ENCODE measurements at regions of chr18 and their contacts with region 1.

Region 1: GRCh38 chr18:35459005-35459441 is 38.7 kb downstream of the INO80C start:
- DNase-seq: peak; percentile 74
- H3K4me3 Mint-ChIP-seq: no peak overlapping the region
- H3K27ac Mint-ChIP-seq: peak overlapping the region; percentile 72
- H3K4me1 Mint-ChIP-seq: peaks cover 73% of the 10 kb centered on the region
- H3K27me3 Mint-ChIP-seq: no peaks in the 10 kb centered on the region
- CTCF ChIP-seq: no peak

Region 2: GRCh38 chr18:35413163-35413511 is 45.9 kb before region 1 on chr18:
- CTCF ChIA-PET with region 1: interaction called, 7 read pairs
- POLR2A ChIA-PET with region 1: interaction called, 26 read pairs
- intact Hi-C with region 1: loop called (anchors 5 kb)
- DNase-seq: no peak
- H3K4me3 Mint-ChIP-seq: no peak overlapping the region
- H3K27ac Mint-ChIP-seq: peak overlapping the region; percentile 64
- H3K4me1 Mint-ChIP-seq: peaks cover 37% of the 10 kb centered on the region
- H3K27me3 Mint-ChIP-seq: no peaks in the 10 kb centered on the region
- CTCF ChIP-seq: no peak

Region 3: GRCh38 chr18:35478520-35479435 is 19.8 kb after region 1 on chr18:
- CTCF ChIA-PET with region 1: interaction called, 20 read pairs
- POLR2A ChIA-PET with region 1: interaction called, 62 read pairs
- intact Hi-C with region 1: loop called (anchors 2 kb)
- DNase-seq: peak; percentile 97
- H3K4me3 Mint-ChIP-seq: peak overlapping the region; percentile 61
- H3K27ac Mint-ChIP-seq: peak overlapping the region; percentile 86
- H3K4me1 Mint-ChIP-seq: peaks cover 45% of the 10 kb centered on the region
- H3K27me3 Mint-ChIP-seq: no peaks in the 10 kb centered on the region
- CTCF ChIP-seq: no peak

Region 4: DNA sequence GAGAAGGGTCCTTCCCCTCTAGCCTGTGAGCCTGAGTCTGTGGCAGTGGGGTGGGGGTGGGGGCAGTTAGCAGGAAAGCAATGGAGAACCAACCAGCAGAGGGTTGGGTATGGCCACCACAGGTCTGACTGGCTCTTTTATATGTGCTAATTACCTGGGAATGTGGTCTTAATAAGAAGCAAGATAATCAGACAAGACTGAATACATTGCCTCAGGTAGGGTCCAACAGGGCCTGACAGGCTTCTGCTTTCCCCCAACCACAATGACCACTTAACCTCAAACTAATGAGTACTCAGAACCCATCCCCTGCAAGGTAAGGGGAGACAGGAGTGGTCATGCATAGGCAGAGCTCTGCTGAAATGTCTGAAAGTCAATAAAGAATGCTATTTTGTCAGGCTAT is 83.3 kb after region 1 on chr18:
- CTCF ChIA-PET with region 1: no interaction called
- POLR2A ChIA-PET with region 1: no interaction called
- intact Hi-C with region 1: no loop called
- DNase-seq: no peak
- H3K4me3 Mint-ChIP-seq: no peak overlapping the region
- H3K27ac Mint-ChIP-seq: no peak overlapping the region
- H3K4me1 Mint-ChIP-seq: no peaks in the 10 kb centered on the region
- H3K27me3 Mint-ChIP-seq: no peaks in the 10 kb centered on the region
- CTCF ChIP-seq: no peak

Measured in MCF 10A (cell line).